Activated naive CD4-positive, alpha-beta T cell treated with anti-CD3 and anti-CD28 coated beads, Interleukin-2, amount 10 ng/mL, durations not matched to agents 7 days and 5 days (primary cell): ENCODE measurements at regions of chr2 and their contacts with region 1.

Region 1: GRCh38 chr2:25131567-25132298 is 36.6 kb downstream of the POMC start:
- DNase-seq: peak; percentile 52
- H3K4me3 Mint-ChIP-seq: peak overlapping the region; percentile 10
- H3K27ac Mint-ChIP-seq: no peak overlapping the region
- H3K4me1 Mint-ChIP-seq: peaks cover 11% of the 10 kb centered on the region
- H3K27me3 Mint-ChIP-seq: peaks cover 83% of the 10 kb centered on the region

Region 2: GRCh38 chr2:24409700-24410556 is 721.8 kb before region 1 on chr2:
- CTCF ChIA-PET with region 1: interaction called, 19 read pairs
- DNase-seq: peak; percentile 51
- H3K4me3 Mint-ChIP-seq: no peak overlapping the region
- H3K27ac Mint-ChIP-seq: no peak overlapping the region
- H3K4me1 Mint-ChIP-seq: no peaks in the 10 kb centered on the region
- H3K27me3 Mint-ChIP-seq: peaks cover 6% of the 10 kb centered on the region

Region 3: DNA sequence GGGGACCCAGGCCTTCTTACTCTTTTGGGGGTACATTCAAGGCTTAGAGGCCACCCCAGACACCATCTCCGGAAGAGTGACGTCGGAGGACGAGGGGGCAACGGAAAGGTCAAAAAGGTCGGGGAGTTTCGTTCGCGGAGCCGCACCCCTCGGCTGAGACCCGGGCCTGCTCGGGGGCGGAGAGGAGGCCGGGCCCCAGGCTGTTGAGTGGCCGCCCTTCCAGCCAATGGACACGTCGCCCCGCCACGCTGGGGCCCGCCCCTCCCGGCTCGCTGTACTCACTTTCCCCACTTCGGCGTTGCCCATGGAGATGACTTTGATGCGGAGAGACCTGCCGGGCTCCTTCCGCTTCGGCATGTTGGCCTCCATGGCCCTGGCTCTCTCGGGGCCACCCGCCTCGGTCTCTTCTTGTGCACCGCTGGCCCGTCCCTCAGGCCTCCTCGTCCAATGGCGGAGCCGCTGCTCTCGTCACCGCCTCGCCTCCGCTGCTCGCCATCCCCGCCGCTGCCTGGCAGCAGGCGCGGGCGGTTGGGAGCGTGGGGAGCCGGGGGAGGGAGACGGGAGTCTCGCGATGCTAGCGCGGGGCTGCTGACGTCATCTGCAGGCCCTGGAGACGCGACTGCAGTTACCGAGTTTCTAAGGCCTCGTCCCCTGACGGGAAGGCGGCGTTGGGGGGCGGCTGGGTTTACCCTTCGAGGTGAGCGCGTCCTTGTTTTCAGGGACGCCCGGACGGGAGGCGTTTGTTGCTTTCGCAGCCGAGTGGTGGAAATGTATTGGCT is 160.0 kb before region 1 on chr2 and contains the start of gene DNAJC27:
- CTCF ChIA-PET with region 1: interaction called, 161 read pairs
- DNase-seq: peak; percentile 99
- H3K4me3 Mint-ChIP-seq: peak within 1 kb of the TSS; percentile 97
- H3K27ac Mint-ChIP-seq: peak within 1 kb of the TSS; percentile 100
- H3K4me1 Mint-ChIP-seq: peaks cover 36% of the 10 kb centered on the region
- H3K27me3 Mint-ChIP-seq: peaks cover 10% of the 10 kb centered on the region